Activated T-helper 1 cell treated with anti-CD3 and anti-CD28 coated beads, Interleukin-12 subunit alpha, Interleukin-12 subunit beta, Interleukin-2, Interleukin-4 antibody, amounts not matched to agents 30 ng/mL and 10 ng/mL and 1 ng/mL, durations not matched to agents 14 hours and 24 hours and 36 hours (primary cell): ENCODE measurements at regions of chr11 and their contacts with region 1.

Region 1: GRCh38 chr11:20397281-20397680 is 9.8 kb downstream of the PRMT3 start:
- DNase-seq: no peak
- H3K4me3 Mint-ChIP-seq: no peak overlapping the region
- H3K27ac Mint-ChIP-seq: no peak overlapping the region
- H3K4me1 Mint-ChIP-seq: peaks cover 15% of the 10 kb centered on the region
- H3K27me3 Mint-ChIP-seq: no peaks in the 10 kb centered on the region

Region 2: GRCh38 chr11:20443596-20443995 is 46.3 kb after region 1 on chr11:
- intact Hi-C with region 1: loop called (anchors 1 kb)
- DNase-seq: no peak
- H3K4me3 Mint-ChIP-seq: no peak overlapping the region
- H3K27ac Mint-ChIP-seq: no peak overlapping the region
- H3K4me1 Mint-ChIP-seq: no peaks in the 10 kb centered on the region
- H3K27me3 Mint-ChIP-seq: no peaks in the 10 kb centered on the region

Region 3: GRCh38 chr11:20609727-20610707 is 212.7 kb after region 1 on chr11:
- intact Hi-C with region 1: loop called (anchors 1 kb)
- DNase-seq: peak; percentile 48
- H3K4me3 Mint-ChIP-seq: peak overlapping the region; percentile 66
- H3K27ac Mint-ChIP-seq: no peak overlapping the region
- H3K4me1 Mint-ChIP-seq: peaks cover 9% of the 10 kb centered on the region
- H3K27me3 Mint-ChIP-seq: peaks cover 64% of the 10 kb centered on the region